ENCODE measurements at regions of chr7 and their contacts with region 1.

Region 1: GRCh38 chr7:30062591-30062990 is 34.4 kb downstream of the PLEKHA8 start:
- DNase-seq: no peak
- ATAC-seq: peak; percentile 74
- H3K4me3 Mint-ChIP-seq: no peak overlapping the region
- H3K27ac Mint-ChIP-seq: no peak overlapping the region
- H3K4me1 Mint-ChIP-seq: peaks cover 3% of the 10 kb centered on the region
- H3K27me3 Mint-ChIP-seq: no peaks in the 10 kb centered on the region
- CTCF ChIP-seq: peak; percentile 45

Region 2: GRCh38 chr7:29878081-29878688 is 184.4 kb before region 1 on chr7:
- CTCF ChIA-PET with region 1: interaction called, 8 read pairs
- POLR2A ChIA-PET with region 1: no interaction called
- intact Hi-C with region 1: loop called (anchors 5 kb)
- DNase-seq: peak; percentile 60
- ATAC-seq: no peak
- H3K4me3 Mint-ChIP-seq: no peak overlapping the region
- H3K27ac Mint-ChIP-seq: no peak overlapping the region
- H3K4me1 Mint-ChIP-seq: peaks cover 6% of the 10 kb centered on the region
- H3K27me3 Mint-ChIP-seq: peaks cover 5% of the 10 kb centered on the region
- CTCF ChIP-seq: peak; percentile 66

Region 3: DNA sequence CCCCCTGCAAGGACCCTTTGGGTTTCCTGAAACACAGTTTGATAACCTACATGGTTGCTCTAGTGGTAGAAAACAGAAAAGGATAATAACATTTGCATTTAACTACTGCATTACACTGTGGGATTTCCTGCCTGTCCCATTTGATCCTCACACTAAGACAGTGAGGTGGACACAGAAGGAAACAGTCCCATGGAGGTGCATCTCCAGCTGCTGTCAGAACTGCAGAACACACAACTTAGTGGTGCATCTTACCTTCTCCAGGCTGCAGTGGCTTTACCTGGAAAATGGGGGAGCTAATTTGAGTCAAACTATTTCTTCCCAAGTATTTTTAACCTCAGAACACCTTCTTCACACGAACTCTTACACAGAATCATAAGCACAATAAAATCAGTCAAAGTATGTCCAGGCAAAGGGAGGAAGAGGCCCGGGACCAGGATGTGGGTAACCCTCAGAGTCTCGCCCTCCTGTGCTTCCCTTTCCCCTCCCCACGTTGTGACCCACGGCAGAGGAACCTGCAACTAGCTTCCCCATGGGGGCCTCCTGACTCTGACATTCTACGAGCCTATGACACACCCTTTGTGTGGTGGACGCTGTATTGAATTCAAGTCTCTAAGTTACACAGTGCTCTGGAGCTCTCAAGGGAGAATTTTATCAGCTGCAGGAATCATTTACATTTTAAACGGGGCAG is 106.6 kb before region 1 on chr7:
- CTCF ChIA-PET with region 1: interaction called, 10 read pairs
- POLR2A ChIA-PET with region 1: no interaction called
- intact Hi-C with region 1: loop called (anchors 10 kb)
- DNase-seq: peak; percentile 65
- ATAC-seq: peak; percentile 94
- H3K4me3 Mint-ChIP-seq: no peak overlapping the region
- H3K27ac Mint-ChIP-seq: peak overlapping the region; percentile 47
- H3K4me1 Mint-ChIP-seq: peaks cover 16% of the 10 kb centered on the region
- H3K27me3 Mint-ChIP-seq: no peaks in the 10 kb centered on the region
- CTCF ChIP-seq: no peak

Region 4: DNA sequence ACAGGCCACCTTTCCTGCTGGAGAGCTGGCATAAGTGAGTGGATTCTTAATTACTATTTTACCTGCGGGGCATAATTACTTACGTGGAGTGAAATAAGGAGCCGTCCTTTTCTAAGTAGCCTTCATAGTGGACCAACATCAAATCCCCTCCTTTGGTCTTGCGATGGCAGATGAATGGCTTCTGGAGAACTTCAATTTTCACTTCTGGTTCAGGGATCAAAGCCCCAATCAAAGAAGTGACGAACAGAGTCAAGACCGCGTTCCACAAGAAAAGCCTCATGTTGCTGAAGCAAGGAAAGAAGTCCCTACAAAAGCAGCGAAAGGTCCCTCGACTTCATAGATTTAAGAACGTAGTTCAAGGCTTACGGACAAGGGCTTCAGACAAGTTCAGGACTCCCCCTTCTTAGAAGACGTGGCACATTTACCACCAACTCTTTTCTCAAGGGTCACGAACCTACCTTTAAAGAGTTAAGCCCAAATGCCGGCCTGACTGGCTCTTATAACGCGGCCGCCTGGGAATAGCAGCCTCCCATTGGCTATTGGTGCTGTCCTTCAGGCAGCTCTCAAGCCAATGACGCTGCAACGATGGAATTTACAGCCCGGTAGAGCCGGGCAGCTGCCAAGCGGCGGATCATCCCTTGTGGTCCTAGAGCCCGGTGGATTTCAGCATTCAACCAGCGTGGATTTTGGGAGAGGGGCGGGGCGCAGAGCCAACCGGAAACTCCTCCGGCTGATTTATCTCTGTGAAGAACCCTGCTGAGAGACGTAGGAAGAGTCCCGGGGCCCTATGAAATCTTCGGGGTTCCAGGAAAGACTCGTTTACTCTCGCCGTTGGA is 36.1 kb before region 1 on chr7 and contains the start of gene FKBP14:
- CTCF ChIA-PET with region 1: interaction called, 30 read pairs
- POLR2A ChIA-PET with region 1: no interaction called
- intact Hi-C with region 1: no loop called
- DNase-seq: peak; percentile 96
- ATAC-seq: peak; percentile 86
- H3K4me3 Mint-ChIP-seq: no peak within 1 kb of the TSS
- H3K27ac Mint-ChIP-seq: peak within 1 kb of the TSS; percentile 90
- H3K4me1 Mint-ChIP-seq: peaks cover 26% of the 10 kb centered on the region
- H3K27me3 Mint-ChIP-seq: no peaks in the 10 kb centered on the region
- CTCF ChIP-seq: no peak
- total RNA-seq, gene FKBP14: 8.8 to 9.0 TPM

Region 5: GRCh38 chr7:30074422-30075030 is 11.9 kb after region 1 on chr7:
- CTCF ChIA-PET with region 1: interaction called, 15 read pairs
- POLR2A ChIA-PET with region 1: no interaction called
- intact Hi-C with region 1: no loop called
- DNase-seq: no peak
- ATAC-seq: no peak
- H3K4me3 Mint-ChIP-seq: no peak overlapping the region
- H3K27ac Mint-ChIP-seq: no peak overlapping the region
- H3K4me1 Mint-ChIP-seq: no peaks in the 10 kb centered on the region
- H3K27me3 Mint-ChIP-seq: no peaks in the 10 kb centered on the region
- CTCF ChIP-seq: peak; percentile 55

Region 6: GRCh38 chr7:30157204-30157603 is 94.6 kb after region 1 on chr7:
- CTCF ChIA-PET with region 1: no interaction called
- POLR2A ChIA-PET with region 1: no interaction called
- intact Hi-C with region 1: no loop called
- DNase-seq: peak; percentile 59
- ATAC-seq: peak; percentile 64
- H3K4me3 Mint-ChIP-seq: peak overlapping the region; percentile 1
- H3K27ac Mint-ChIP-seq: peak overlapping the region; percentile 31
- H3K4me1 Mint-ChIP-seq: peaks cover 35% of the 10 kb centered on the region
- H3K27me3 Mint-ChIP-seq: no peaks in the 10 kb centered on the region
- CTCF ChIP-seq: no peak

Region 7: GRCh38 chr7:30224511-30225062 is 162.0 kb after region 1 on chr7:
- CTCF ChIA-PET with region 1: no interaction called
- POLR2A ChIA-PET with region 1: no interaction called
- intact Hi-C with region 1: no loop called
- DNase-seq: no peak
- ATAC-seq: no peak
- H3K4me3 Mint-ChIP-seq: no peak overlapping the region
- H3K27ac Mint-ChIP-seq: no peak overlapping the region
- H3K4me1 Mint-ChIP-seq: peaks cover 5% of the 10 kb centered on the region
- H3K27me3 Mint-ChIP-seq: no peaks in the 10 kb centered on the region
- CTCF ChIP-seq: no peak

Region 8: DNA sequence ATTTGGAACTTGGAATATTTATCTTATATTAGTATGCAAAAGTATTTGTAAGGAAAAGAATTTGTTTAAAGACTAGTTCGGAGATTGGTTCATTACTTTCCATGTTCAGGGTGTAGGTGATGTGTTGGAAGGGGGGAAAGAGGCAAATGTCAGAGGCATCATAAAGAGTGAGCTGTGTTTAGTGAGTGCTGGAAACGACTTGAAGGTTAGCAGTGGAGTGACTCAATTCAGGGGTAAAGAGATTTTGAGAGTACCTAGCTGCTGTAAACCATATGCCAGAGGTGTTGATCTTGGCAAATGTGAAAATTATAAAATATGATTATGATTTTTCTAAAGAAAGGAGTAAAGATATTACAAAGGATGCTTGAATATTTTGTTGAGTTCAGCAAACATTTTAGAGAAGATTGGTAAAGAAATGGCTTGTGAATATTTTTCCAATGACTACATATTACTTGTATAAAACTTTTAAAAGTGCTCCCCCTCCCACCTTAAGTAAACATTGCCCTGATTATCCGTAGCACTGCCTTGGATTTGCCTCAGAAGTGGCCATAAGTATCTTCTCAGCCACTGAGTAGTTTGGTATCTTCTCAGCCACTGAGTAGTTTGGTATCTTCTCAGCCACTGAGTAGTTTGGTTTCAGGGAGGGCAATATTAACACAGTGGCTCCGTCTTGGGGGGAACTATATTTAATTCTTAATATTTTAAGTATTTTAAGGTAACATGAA is 273.3 kb after region 1 on chr7:
- CTCF ChIA-PET with region 1: no interaction called
- POLR2A ChIA-PET with region 1: no interaction called
- intact Hi-C with region 1: no loop called
- DNase-seq: no peak
- ATAC-seq: peak; percentile 77
- H3K4me3 Mint-ChIP-seq: no peak overlapping the region
- H3K27ac Mint-ChIP-seq: no peak overlapping the region
- H3K4me1 Mint-ChIP-seq: peaks cover 65% of the 10 kb centered on the region
- H3K27me3 Mint-ChIP-seq: no peaks in the 10 kb centered on the region
- CTCF ChIP-seq: no peak

Measured in activated CD8-positive, alpha-beta T cell treated with anti-CD3 and anti-CD28 coated beads for 36 hours (primary cell).